ENCODE measurements at regions of chr5 and their contacts with region 1.

Region 1: DNA sequence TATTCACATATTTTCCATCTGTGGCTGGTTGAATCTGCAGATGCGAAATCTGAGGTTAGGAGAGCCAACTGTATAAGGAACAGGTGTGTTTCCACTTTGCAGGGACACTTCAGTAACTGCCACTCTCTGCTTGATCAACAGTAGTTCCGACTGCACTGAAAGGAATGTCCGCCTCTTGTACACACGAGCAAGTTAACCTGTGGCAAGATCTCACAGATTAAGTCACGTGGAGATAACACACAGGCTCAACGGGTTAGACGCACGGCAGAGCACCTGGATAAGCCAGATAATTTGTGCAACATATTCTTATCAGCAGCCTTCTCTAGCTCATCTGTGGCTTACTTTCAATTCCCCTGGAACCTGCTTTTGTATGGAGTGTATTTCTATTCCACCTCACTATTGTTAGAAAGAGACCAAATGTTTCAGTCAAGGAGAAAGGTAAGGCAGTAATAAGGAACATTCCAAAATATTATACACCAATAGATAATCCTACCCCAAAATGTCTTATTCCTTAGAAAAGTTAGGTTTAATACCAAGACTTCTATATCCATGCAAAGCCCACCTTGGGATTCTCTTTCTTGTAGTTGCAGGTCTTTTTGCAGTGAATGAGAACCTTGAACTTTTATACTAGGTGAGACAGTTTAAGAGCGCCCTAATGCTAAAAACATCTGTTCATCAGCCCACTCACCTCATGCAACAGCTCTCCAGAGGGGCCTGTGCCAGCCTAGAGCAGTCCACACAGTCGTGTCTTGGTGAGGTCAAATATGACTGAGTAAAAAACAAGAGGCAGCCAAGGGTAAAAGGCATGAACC is 6.5 kb upstream of the C9 start:
- DNase-seq: no peak
- H3K4me3 ChIP-seq: no peak overlapping the region
- H3K27ac ChIP-seq: no peak overlapping the region
- H3K4me1 ChIP-seq: no peaks in the 10 kb centered on the region
- H3K27me3 ChIP-seq: no peaks in the 10 kb centered on the region
- CTCF ChIP-seq: no peak

Region 2: GRCh38 chr5:38556599-38557305 is 814.0 kb before region 1 on chr5 and contains the start of gene LIFR:
- CTCF ChIA-PET with region 1: no interaction called
- POLR2A ChIA-PET with region 1: no interaction called
- intact Hi-C with region 1: no loop called
- DNase-seq: peak; percentile 89
- H3K4me3 ChIP-seq: peak within 1 kb of the TSS; percentile 73
- H3K27ac ChIP-seq: peak within 1 kb of the TSS; percentile 90
- H3K4me1 ChIP-seq: peaks cover 14% of the 10 kb centered on the region
- H3K27me3 ChIP-seq: no peaks in the 10 kb centered on the region
- CTCF ChIP-seq: no peak
- total RNA-seq, gene LIFR: 44.2 and 47.9 TPM in 2 replicates

Region 3: GRCh38 chr5:39639609-39640078 is 268.9 kb after region 1 on chr5:
- CTCF ChIA-PET with region 1: no interaction called
- POLR2A ChIA-PET with region 1: interaction called, 12 read pairs
- intact Hi-C with region 1: no loop called
- DNase-seq: no peak
- H3K4me3 ChIP-seq: no peak overlapping the region
- H3K27ac ChIP-seq: no peak overlapping the region
- H3K4me1 ChIP-seq: no peaks in the 10 kb centered on the region
- H3K27me3 ChIP-seq: peaks cover 7% of the 10 kb centered on the region
- CTCF ChIP-seq: no peak

Measured in A673 (cell line).